Endothelial cell of umbilical vein (primary cell): ENCODE measurements at regions of chr12 and their contacts with region 1.

Region 1: GRCh38 chr12:81257947-81258551 is 180.2 kb downstream of the ACSS3 start:
- DNase-seq: peak; percentile 66
- H3K4me3 ChIP-seq: no peak overlapping the region
- H3K27ac ChIP-seq: no peak overlapping the region
- H3K4me1 ChIP-seq: peaks cover 2% of the 10 kb centered on the region
- H3K27me3 ChIP-seq: peaks cover 0 to 3% of the 10 kb centered on the region in 2 experiments
- CTCF ChIP-seq: peak; percentile 13 to 40
- POLR2A ChIP-seq: no peak

Region 2: GRCh38 chr12:80412369-80412953 is 845.6 kb before region 1 on chr12:
- CTCF ChIA-PET with region 1: interaction called, 9 read pairs
- POLR2A ChIA-PET with region 1: no interaction called
- dilution Hi-C with region 1: no loop called
- intact Hi-C with region 1: loop called (anchors 2 kb)
- DNase-seq: peak; percentile 56
- H3K4me3 ChIP-seq: no peak overlapping the region
- H3K27ac ChIP-seq: no peak overlapping the region
- H3K4me1 ChIP-seq: no peaks in the 10 kb centered on the region
- H3K27me3 ChIP-seq: no peaks in the 10 kb centered on the region
- CTCF ChIP-seq: peak; percentile 33 to 48
- POLR2A ChIP-seq: no peak

Region 3: DNA sequence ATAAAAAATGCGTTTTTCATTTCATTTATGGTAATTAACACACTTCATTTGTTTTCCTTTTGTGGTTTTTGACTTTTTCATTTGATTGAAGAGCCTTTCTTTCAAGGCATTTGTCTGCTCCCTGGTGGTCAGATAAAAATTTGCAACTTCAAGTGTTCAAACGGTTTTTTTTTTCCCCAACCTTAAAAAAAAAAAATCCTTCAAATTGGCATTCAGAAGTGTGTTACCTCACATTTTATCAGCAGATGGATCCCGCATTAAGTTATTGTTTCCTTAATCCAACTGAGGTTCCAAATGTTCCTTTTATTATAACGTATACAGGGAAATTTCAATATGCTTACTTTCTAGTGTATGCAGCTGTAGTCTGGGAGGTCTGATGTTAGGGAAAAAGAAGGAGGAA is 494.2 kb before region 1 on chr12:
- CTCF ChIA-PET with region 1: interaction called, 15 read pairs
- POLR2A ChIA-PET with region 1: no interaction called
- dilution Hi-C with region 1: no loop called
- intact Hi-C with region 1: loop called (anchors 1 kb)
- DNase-seq: peak; percentile 73
- H3K4me3 ChIP-seq: no peak overlapping the region
- H3K27ac ChIP-seq: no peak overlapping the region
- H3K4me1 ChIP-seq: no peaks in the 10 kb centered on the region
- H3K27me3 ChIP-seq: no peaks in the 10 kb centered on the region
- CTCF ChIP-seq: peak; percentile 28 to 38
- POLR2A ChIP-seq: no peak

Region 4: DNA sequence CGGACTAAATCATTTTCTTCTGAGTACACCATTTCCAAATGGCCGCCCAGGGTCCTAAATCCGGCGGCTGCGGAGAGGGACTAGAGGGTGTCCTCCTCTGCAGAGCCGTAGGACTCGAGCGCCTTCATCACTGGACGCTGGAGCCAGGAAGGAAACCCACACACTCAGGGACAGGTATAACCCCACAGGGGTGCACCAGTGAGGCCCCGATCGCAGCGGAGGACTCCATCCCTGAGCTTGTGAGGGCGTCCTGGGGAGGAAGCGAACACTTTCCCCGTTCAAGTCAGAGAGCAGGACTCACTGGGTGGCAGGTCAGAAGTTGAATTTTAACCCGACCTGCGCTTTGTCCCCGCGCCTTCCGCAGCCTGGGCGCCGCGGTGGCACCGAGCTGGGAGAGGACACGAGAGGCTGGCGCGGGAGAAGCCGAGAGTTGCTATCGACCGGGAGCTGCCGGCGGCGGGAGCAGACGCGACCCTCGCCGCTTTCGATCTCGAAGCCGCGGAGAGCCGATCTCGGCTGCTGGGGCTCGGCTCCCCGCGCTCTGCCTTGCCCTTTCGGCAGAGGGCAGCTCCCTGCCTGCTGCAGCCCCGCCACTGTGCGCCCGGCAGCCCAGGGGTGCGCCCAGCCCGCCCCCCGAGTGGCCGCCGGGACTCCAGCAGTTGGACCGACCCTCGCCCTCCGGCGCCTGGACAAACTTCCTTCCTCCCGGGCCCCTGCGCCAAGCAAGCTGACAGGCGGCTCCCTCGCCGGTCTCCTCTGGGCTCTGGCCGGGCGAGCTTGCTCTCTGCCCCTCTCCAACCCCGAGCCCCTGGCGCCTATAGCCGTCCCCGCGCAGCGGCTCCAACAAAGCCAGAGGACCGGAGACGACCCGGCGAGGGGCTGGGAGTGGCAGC is 321.3 kb before region 1 on chr12:
- CTCF ChIA-PET with region 1: interaction called, 17 read pairs
- POLR2A ChIA-PET with region 1: no interaction called
- dilution Hi-C with region 1: no loop called
- intact Hi-C with region 1: loop called (anchors 5 kb)
- DNase-seq: peak; percentile 44
- H3K4me3 ChIP-seq: peak overlapping the region; percentile 47 to 68 (median 64)
- H3K27ac ChIP-seq: no peak overlapping the region
- H3K4me1 ChIP-seq: peaks cover 2% of the 10 kb centered on the region
- H3K27me3 ChIP-seq: peaks cover 0 to 2% of the 10 kb centered on the region in 2 experiments
- CTCF ChIP-seq: no peak
- POLR2A ChIP-seq: no peak

Region 5: GRCh38 chr12:81268664-81268926 is 10.5 kb after region 1 on chr12:
- CTCF ChIA-PET with region 1: interaction called, 17 read pairs
- POLR2A ChIA-PET with region 1: no interaction called
- dilution Hi-C with region 1: no loop called
- intact Hi-C with region 1: no loop called
- DNase-seq: peak; percentile 31
- H3K4me3 ChIP-seq: no peak overlapping the region
- H3K27ac ChIP-seq: no peak overlapping the region
- H3K4me1 ChIP-seq: no peaks in the 10 kb centered on the region
- H3K27me3 ChIP-seq: peaks cover 0 to 8% of the 10 kb centered on the region in 2 experiments
- CTCF ChIP-seq: peak in 1 of 2 donors; percentile 14
- POLR2A ChIP-seq: no peak

Region 6: DNA sequence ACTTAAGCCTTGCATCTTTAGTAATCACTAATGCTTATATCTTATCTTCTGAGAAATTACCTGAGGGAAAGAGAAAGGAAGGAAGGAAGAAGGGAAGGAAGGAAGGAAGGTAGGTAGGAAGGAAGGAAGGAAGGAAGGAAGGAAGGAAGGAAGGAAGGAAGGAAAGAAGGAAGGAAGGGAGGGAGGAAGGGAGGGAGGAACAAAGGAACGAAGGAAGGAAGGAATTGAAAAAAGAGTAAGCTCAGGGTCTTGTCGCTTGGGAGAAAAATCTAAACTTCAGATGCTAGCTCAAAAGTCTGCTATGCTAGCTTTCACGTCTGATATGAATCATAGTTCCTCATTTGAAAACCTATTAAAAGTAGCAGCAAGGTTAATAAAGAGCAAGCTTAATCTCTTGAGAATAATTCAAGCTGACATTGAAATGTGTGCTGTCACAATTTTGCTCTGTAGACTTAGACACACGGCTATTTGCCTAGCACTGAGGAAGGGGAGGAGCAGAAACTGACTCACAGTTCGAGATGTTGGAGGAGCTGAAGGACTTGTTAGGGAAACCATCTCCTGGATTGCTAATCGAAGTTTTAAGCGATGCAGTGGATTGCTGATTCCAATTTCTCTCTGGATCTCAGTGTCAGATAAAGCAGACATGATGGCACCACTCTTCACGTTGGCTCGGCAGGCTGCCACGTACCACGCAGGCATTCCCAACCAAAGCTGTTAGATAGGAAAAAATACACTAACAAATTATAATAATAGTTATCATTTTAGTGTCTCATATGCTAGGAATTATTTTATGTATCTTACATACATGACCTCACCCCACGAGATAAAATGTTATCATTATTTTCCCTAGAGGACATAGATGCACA is 36.5 kb after region 1 on chr12:
- CTCF ChIA-PET with region 1: no interaction called
- POLR2A ChIA-PET with region 1: no interaction called
- dilution Hi-C with region 1: no loop called
- intact Hi-C with region 1: no loop called
- DNase-seq: no peak
- H3K4me3 ChIP-seq: no peak overlapping the region
- H3K27ac ChIP-seq: no peak overlapping the region
- H3K4me1 ChIP-seq: no peaks in the 10 kb centered on the region
- H3K27me3 ChIP-seq: no peaks in the 10 kb centered on the region
- CTCF ChIP-seq: no peak
- POLR2A ChIP-seq: no peak